ENCODE measurements at regions of chr3 and their contacts with region 1.

Region 1: DNA sequence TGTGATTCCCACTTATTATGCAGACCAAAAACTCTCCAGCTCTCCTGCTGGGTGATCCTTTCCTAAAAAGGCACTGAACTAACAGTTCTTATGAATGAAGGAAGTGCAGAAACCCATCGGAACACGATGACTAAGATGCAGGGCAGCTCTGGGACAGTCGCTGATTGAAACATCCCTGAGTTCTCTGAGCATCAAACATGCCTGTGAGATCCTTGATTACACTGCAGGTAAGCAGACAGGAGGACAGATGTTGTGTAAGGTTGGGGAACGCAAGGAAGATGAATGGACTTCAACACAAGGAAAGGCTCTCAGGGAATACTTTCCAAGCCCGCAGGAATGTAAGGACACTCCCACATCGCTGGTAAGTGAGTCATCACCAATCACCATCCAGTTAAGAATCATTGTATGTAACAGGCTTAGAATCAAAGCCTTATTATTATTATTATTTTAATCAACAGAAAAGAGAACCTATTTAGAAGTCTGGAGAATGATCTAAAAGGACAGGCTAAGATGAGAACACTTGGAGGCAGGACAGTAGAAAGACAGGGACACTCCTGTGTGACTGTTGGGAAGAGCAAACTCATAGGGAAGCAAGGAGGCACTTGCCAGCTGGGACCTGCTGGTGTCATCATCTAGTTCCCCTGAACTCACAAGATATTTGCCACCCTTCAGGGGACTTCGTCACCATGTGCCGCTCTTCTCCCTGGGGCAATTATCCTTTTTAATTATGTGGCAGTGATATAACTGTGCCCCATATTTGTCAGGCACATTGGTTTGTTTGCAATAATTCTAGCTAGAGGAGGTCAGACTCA is 26.0 kb downstream of the TMEM158 start:
- DNase-seq: no peak
- H3K4me3 ChIP-seq: no peak overlapping the region
- H3K27ac ChIP-seq: no peak overlapping the region
- H3K4me1 ChIP-seq: no peaks in the 10 kb centered on the region
- H3K27me3 ChIP-seq: no peaks in the 10 kb centered on the region
- CTCF ChIP-seq: no peak
- EP300 ChIP-seq: no peak
- POLR2A ChIP-seq: no peak

Region 2: GRCh38 chr3:44674211-44674610 is 525.8 kb before region 1 on chr3:
- intact Hi-C with region 1: loop called in 1 of 4 experiments (anchors 10 kb)
- DNase-seq: no peak
- H3K4me3 ChIP-seq: no peak overlapping the region
- H3K27ac ChIP-seq: no peak overlapping the region
- H3K4me1 ChIP-seq: no peaks in the 10 kb centered on the region
- H3K27me3 ChIP-seq: no peaks in the 10 kb centered on the region
- CTCF ChIP-seq: no peak
- EP300 ChIP-seq: no peak
- POLR2A ChIP-seq: no peak

Region 3: DNA sequence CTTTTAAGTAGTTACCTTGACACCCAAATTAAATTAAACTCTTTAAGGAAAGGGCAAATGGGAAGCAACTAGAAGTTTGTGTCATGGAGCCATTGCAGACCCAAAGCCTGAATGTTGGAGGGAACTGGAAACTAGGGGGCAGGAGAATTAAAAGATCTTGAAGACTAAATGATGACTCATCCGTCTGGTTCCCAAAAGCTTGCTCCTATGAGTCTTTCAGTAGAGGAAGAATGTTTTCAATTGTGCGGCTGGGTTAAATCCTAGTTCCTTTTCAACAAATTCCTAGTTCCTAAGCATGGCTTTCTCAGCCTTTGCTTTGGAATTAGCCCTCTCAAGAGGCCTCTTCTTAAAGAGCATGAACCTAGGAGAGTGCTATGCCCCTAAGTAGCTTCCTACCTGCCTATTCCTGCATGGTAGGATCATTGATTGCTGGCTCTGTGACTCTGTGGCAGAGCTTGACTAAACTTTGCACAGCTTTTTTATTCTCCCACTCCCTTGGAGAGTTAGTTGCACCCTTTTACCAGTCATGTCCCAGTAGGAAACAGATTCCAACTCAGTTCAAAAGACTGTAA is 156.2 kb before region 1 on chr3:
- intact Hi-C with region 1: loop called in 1 of 4 experiments (anchors 10 kb)
- DNase-seq: no peak
- H3K4me3 ChIP-seq: no peak overlapping the region
- H3K27ac ChIP-seq: no peak overlapping the region
- H3K4me1 ChIP-seq: peaks cover 1% of the 10 kb centered on the region
- H3K27me3 ChIP-seq: no peaks in the 10 kb centered on the region
- CTCF ChIP-seq: no peak
- EP300 ChIP-seq: no peak
- POLR2A ChIP-seq: no peak

Region 4: GRCh38 chr3:45078910-45079522 is 121.0 kb before region 1 on chr3:
- intact Hi-C with region 1: loop called in 1 of 4 experiments (anchors 10 kb)
- DNase-seq: no peak
- H3K4me3 ChIP-seq: no peak overlapping the region
- H3K27ac ChIP-seq: no peak overlapping the region
- H3K4me1 ChIP-seq: no peaks in the 10 kb centered on the region
- H3K27me3 ChIP-seq: no peaks in the 10 kb centered on the region
- CTCF ChIP-seq: no peak
- EP300 ChIP-seq: no peak
- POLR2A ChIP-seq: no peak

Measured in ovary (tissue), 10 donors.